Naive thymus-derived CD8-positive, alpha-beta T cell (primary cell): ENCODE measurements at regions of chr7 and their contacts with region 1.

Region 1: DNA sequence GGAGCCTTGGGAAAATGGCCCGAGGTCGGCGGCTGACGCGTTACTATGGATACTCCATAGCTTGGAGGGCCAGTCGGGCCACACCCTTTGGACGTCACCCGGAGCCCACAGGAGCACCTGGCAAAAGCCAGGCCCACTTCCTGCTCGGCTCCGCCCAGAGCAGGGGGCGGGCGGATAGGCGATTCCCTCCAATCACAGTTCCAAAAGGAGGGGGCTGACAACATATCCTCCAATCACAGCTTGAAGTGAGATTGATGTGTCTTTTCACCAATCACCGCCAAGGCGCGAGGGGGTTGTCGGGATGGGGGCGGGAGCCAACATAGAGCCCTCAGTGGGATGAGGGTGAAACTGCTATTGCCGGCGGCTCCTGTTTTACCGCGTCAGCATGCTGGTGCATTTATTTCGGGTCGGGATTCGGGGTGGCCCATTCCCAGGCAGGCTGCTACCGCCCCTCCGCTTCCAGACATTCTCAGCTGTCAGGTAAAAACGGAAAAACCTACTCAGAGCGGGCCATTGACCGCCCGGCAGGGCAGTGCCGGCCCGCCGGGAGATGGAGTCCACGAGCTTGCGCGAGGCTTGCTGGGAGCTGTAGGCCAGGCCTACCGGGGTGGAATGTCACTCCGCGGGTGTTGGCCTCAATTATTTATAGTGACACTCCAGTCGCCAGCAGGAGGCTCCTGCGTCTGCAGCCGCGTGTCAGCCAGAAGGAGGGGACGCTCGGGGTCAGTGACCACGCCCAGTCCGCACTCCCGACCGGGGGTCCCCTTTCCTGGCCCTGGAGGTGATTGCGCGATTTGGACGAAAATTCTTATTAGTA is at the start of gene ABCB8:
- DNase-seq: peak; percentile 86 to 100 (median 99)
- ATAC-seq: peak; percentile 86 to 96
- H3K4me3 Mint-ChIP-seq: peak within 1 kb of the TSS; percentile 86 to 98 (median 95)
- H3K27ac Mint-ChIP-seq: peak within 1 kb of the TSS; percentile 95 to 100 (median 99)
- H3K4me1 Mint-ChIP-seq: peaks cover 10 to 34% (median 28%) of the 10 kb centered on the region in 4 donors
- H3K27me3 Mint-ChIP-seq: peaks cover 0 to 2% (median 0%) of the 10 kb centered on the region in 5 donors
- polyA plus RNA-seq, gene ABCB8: 17.1 to 18.4 (median 17.4) TPM

Region 2: DNA sequence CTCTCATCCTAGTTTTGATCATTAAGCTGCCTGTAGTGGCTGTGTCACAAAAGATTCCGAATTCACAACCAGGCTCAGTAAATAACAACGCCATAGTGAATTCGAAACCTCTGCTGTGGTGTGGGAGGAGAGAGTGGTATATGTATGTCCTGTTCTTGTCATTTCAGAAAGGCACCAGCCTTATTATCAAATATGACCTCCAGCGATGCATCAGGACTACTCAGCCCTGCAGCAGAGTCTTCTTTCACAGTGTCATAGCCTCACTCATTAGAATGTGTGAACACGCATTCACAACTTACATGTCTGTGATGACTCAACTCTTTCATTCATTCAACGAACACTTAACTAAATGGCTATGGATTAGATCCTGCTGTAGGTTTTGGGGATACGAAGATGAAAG is 160.7 kb before region 1 on chr7:
- POLR2A ChIA-PET with region 1: no interaction called
- DNase-seq: no peak
- ATAC-seq: no peak
- H3K4me3 Mint-ChIP-seq: no peak overlapping the region
- H3K27ac Mint-ChIP-seq: no peak overlapping the region
- H3K4me1 Mint-ChIP-seq: no peaks in the 10 kb centered on the region
- H3K27me3 Mint-ChIP-seq: peaks cover 2 to 30% (median 14%) of the 10 kb centered on the region in 5 donors

Region 3: GRCh38 chr7:150974468-150975391 is 53.6 kb before region 1 on chr7:
- POLR2A ChIA-PET with region 1: interaction called, 10 read pairs
- DNase-seq: peak; percentile 69 to 90 (median 80)
- ATAC-seq: peak; percentile 75 to 80
- H3K4me3 Mint-ChIP-seq: peak overlapping the region; percentile 80 to 92 (median 87)
- H3K27ac Mint-ChIP-seq: peak overlapping the region; percentile 70 to 98 (median 94)
- H3K4me1 Mint-ChIP-seq: peaks cover 30 to 71% (median 50%) of the 10 kb centered on the region in 4 donors
- H3K27me3 Mint-ChIP-seq: peaks cover 3 to 27% (median 15%) of the 10 kb centered on the region in 5 donors

Region 4: DNA sequence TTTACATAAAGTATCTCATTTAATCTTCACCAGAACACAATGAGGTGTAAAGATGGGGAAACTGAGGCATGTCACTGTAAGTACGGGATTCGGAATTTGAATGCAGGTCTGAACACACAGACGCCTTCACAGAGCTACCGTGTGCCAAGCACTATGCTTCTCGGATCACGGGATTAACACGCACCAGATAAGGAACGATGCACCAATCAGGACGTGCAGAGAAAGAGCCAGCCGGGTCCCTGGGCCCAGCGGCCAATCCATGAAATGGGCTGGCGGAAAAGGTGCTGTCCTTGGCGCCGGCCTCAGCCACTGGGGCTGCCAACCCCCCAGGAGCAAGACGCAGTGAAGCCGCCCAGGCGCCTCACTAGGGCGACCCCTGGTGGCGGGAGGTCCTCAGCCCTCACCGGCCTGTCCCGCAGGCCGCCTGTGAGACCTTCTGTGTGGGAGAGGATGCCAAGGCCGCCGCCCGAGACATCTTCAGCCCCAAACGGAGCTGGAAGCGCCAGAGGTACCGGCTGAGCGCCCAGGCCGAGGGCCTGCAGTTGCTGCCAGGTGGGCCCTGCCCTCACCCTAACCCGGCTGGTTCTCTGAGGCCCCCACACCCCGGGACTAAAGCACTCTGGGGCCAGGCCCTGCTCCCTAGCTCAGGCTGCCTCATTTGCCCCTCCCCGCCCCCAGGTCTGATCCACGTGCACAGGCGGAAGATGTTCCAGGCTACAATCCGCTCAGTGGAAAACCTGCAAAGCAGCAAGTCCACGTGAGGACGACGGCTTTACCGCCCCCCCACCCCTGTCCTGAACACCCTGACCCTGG is 19.6 kb before region 1 on chr7:
- POLR2A ChIA-PET with region 1: interaction called, 37 read pairs
- DNase-seq: peak; percentile 56 to 85 (median 70)
- ATAC-seq: peak; percentile 39 to 49
- H3K4me3 Mint-ChIP-seq: peak overlapping the region; percentile 72 to 89 (median 84)
- H3K27ac Mint-ChIP-seq: peak overlapping the region; percentile 84 to 97 (median 94)
- H3K4me1 Mint-ChIP-seq: peaks cover 26 to 66% (median 62%) of the 10 kb centered on the region in 4 donors
- H3K27me3 Mint-ChIP-seq: peaks cover 0 to 2% (median 0%) of the 10 kb centered on the region in 5 donors

Region 5: DNA sequence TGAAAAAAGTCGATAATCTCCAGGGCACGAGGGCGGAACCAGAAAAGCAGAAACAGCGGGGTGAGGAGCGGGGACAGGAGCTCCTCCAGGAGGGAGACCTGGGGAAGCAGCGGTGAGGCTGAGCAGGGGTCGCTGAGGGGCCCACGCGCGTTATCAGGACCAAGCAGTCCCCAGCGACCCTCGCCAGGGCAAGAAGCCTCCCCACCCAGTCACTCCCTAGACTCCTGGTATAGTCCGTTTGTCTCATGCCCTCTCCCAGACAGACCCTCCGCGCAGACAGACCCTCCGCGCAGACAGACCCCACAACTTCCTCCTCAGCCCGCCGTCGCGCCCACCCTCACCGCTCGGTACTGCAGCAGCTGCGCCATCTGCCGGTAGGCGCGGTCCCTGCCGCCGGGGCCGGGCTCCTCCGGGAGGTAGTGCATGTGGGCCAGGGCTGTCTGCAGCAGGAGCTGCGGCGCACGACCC is 10.4 kb before region 1 on chr7:
- POLR2A ChIA-PET with region 1: interaction called, 54 read pairs
- DNase-seq: peak; percentile 72 to 91 (median 82)
- ATAC-seq: peak; percentile 53 to 56
- H3K4me3 Mint-ChIP-seq: peak overlapping the region; percentile 75 to 97 (median 88)
- H3K27ac Mint-ChIP-seq: peak overlapping the region; percentile 64 to 99 (median 95)
- H3K4me1 Mint-ChIP-seq: peaks cover 38 to 63% (median 57%) of the 10 kb centered on the region in 4 donors
- H3K27me3 Mint-ChIP-seq: peaks cover 0 to 9% (median 0%) of the 10 kb centered on the region in 5 donors

Region 6: DNA sequence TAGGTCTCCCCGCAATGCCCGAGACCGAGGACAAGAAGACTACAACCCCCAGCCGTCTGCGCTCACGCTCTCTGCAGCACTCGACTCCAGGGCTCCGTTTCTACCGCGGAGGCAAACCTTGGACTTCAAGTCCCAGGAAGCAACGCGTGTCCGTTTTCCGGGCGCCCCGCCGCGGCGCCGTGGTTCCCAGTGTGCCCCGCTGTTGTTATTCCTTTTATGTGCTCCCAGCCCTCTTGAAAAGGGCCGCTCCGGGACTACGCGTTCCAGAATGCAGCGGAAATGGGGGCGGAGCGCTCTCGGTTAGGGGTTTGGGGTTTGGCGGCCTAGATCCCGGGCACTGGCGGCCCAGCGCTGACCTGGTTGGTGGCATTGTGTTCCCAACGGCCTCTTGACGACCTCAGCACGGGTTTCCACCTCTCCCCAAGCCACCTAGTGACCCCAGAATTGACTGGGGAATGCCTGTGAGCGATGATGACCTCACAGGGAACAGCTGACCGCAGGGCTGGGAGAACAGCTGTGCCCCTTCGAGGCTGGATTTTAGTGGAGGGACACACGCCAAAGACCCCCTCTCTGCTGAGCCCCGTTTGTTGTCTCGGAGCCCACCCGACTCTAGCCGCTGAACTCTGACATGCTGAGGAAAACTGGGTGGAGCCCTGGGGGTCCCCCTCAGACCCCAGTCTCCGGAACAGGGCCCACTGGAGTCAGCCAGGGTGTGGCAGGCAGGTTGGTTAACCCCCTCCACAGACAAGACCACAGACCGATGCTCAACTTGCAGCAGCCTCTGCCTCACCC is 29.8 kb after region 1 on chr7:
- POLR2A ChIA-PET with region 1: interaction called, 21 read pairs
- DNase-seq: peak; percentile 91 to 99 (median 98)
- ATAC-seq: peak; percentile 91
- H3K4me3 Mint-ChIP-seq: peak overlapping the region; percentile 88 to 97 (median 94)
- H3K27ac Mint-ChIP-seq: peak overlapping the region; percentile 85 to 98 (median 96)
- H3K4me1 Mint-ChIP-seq: peaks cover 18 to 51% (median 44%) of the 10 kb centered on the region in 4 donors
- H3K27me3 Mint-ChIP-seq: peaks cover 0 to 1% (median 0%) of the 10 kb centered on the region in 5 donors

Region 7: DNA sequence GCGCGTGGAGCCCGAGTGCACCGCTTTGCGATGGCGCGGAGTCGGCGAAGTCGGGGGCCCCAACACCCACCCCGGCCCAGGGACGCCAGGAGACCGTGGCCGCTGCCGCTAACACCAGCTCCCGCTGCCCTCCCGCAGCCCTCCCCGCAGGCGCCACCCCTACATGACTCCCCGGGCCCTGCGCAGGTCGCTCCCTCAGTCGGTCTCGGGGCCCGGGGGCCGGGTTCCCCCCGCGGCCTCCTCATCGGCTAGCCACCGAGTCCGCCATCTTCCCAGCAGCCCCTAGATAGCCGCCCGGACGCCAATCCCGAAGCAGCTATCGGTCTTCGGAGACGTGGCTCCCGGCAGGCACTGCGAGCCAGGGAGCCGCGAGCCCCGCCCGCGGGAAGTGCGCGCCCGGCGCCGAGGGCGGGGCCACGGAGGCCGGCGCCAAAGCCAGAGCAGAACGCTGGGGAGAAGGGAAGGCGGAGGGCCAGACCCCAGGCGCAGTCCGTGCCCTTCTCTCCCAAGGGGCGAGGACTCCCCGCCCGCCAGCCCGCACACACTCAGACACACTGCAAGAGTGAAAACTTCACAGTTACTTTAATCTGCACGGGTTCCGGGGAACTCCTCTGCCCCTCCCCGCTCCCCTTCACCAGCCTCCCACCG is 52.3 kb after region 1 on chr7 and contains the start of gene FASTK:
- POLR2A ChIA-PET with region 1: interaction called, 15 read pairs
- DNase-seq: peak; percentile 82 to 93 (median 86)
- ATAC-seq: peak; percentile 72 to 80
- H3K4me3 Mint-ChIP-seq: peak within 1 kb of the TSS; percentile 81 to 93 (median 88)
- H3K27ac Mint-ChIP-seq: peak within 1 kb of the TSS; percentile 46 to 95 (median 90)
- H3K4me1 Mint-ChIP-seq: peaks cover 20 to 55% (median 44%) of the 10 kb centered on the region in 4 donors
- H3K27me3 Mint-ChIP-seq: peaks cover 0 to 13% (median 7%) of the 10 kb centered on the region in 5 donors
- polyA plus RNA-seq, gene FASTK: 38.8 to 63.6 (median 44.2) TPM

Region 8: DNA sequence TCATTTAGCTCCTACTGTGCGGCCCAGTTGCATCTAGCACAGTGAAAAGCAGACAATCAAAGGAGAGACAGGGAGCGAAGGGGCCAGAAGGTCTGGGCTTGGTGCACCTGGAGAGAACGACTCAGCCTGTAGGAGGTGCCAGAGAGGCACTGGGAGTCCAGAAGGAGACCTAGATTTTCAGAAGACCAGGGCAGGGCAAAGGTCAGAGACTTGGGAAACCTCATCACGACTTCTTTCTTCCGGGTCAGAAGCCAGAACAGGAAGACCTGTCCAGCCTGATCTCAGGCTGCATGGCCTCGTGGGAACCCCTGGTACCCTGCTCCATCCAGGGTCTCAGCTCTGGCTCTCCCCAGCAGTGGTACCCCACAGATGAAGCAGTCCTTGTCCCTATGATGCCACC is 63.1 kb after region 1 on chr7:
- POLR2A ChIA-PET with region 1: no interaction called
- DNase-seq: peak in 1 of 10 donors; percentile 19
- ATAC-seq: no peak
- H3K4me3 Mint-ChIP-seq: no peak overlapping the region
- H3K27ac Mint-ChIP-seq: peak overlapping the region in 1 of 10 donors; percentile 41
- H3K4me1 Mint-ChIP-seq: peaks cover 12 to 21% (median 15%) of the 10 kb centered on the region in 4 donors
- H3K27me3 Mint-ChIP-seq: peaks cover 0 to 20% (median 4%) of the 10 kb centered on the region in 5 donors